Mammary epithelial cell (primary cell): ENCODE measurements at regions of chr18 and their contacts with region 1.

Region 1: DNA sequence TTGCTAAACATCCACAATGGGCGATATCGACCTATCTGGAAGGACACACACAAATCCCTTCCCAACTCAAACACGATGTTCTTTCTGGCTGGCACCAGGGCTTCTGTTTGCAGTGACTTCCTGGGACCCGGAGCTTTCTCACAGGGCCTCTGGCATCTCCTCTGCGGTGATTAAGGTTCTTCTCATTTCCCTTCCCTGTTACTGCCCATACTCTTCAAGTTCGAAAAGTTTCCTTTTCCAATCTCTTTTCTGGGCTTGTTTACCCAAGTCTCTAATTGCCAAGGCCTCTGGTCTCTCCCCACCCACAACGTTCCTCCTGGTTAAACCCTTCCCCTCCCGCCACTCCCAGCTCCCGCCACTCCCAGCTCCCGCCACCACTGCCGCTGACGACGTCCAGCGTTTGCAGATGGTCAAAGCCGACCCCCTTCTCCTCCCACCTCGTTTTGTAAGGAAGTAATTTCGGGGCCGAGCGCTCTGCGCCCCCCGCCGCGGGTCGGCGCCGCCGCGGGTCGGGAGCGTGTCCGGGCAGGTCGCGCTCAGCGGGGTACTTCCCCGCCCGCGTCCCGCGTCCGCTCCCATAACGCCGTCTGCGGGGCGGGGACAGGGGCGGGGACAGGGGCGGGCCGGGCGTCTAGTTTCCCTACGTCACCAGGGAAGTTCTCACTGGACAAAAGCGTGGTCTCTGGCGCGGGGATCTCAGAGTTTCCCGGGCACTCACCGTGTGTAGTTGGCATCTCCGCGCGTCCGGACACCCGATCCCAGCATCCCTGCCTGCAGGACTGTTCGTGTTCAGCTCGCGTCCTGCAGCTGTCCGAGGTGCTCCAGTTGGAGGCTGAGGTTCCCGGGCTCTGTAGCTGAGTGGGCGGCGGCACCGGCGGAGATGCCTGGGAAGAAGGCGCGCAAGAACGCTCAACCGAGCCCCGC is at the start of gene PMAIP1:
- DNase-seq: peak; percentile 95
- H3K4me3 ChIP-seq: peak within 1 kb of the TSS; percentile 79 to 99 (median 83)
- H3K27ac ChIP-seq: peak within 1 kb of the TSS; percentile 98
- H3K4me1 ChIP-seq: peaks cover 24% of the 10 kb centered on the region
- H3K27me3 ChIP-seq: no peaks in the 10 kb centered on the region
- CTCF ChIP-seq: no peak
- total RNA-seq, gene PMAIP1: 17.8 to 34.3 TPM

Region 2: GRCh38 chr18:59787998-59788790 is 111.4 kb before region 1 on chr18:
- CTCF ChIA-PET with region 1: no interaction called
- dilution Hi-C with region 1: no loop called
- in situ Hi-C with region 1: no loop called
- intact Hi-C with region 1: no loop called
- DNase-seq: peak; percentile 66
- H3K4me3 ChIP-seq: no peak overlapping the region
- H3K27ac ChIP-seq: no peak overlapping the region
- H3K4me1 ChIP-seq: peaks cover 14% of the 10 kb centered on the region
- H3K27me3 ChIP-seq: no peaks in the 10 kb centered on the region
- CTCF ChIP-seq: no peak

Region 3: DNA sequence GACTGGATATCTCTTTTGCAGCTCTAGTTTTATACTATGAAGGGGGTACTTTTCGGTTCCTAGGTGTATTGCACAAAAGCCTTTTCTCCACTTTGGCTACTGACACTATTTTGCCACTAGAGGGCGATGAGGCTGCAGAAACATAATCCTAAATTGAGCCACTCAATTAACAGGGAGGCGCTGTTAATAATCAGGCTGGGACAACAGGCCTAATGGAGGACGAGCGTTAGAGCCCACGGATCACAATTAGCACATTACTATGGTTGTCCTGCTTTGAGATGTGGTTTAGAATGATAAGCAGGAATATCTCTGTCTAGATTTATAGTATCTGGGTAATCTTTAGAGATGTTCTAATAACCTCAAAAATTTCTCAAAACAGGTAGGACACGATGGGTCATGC is 62.0 kb before region 1 on chr18:
- CTCF ChIA-PET with region 1: no interaction called
- dilution Hi-C with region 1: no loop called
- in situ Hi-C with region 1: loop called in 1 of 2 experiments (anchors 10 kb)
- intact Hi-C with region 1: loop called (anchors 1 kb)
- DNase-seq: peak; percentile 64
- H3K4me3 ChIP-seq: no peak overlapping the region
- H3K27ac ChIP-seq: no peak overlapping the region
- H3K4me1 ChIP-seq: no peaks in the 10 kb centered on the region
- H3K27me3 ChIP-seq: no peaks in the 10 kb centered on the region
- CTCF ChIP-seq: peak; percentile 91 to 95

Region 4: DNA sequence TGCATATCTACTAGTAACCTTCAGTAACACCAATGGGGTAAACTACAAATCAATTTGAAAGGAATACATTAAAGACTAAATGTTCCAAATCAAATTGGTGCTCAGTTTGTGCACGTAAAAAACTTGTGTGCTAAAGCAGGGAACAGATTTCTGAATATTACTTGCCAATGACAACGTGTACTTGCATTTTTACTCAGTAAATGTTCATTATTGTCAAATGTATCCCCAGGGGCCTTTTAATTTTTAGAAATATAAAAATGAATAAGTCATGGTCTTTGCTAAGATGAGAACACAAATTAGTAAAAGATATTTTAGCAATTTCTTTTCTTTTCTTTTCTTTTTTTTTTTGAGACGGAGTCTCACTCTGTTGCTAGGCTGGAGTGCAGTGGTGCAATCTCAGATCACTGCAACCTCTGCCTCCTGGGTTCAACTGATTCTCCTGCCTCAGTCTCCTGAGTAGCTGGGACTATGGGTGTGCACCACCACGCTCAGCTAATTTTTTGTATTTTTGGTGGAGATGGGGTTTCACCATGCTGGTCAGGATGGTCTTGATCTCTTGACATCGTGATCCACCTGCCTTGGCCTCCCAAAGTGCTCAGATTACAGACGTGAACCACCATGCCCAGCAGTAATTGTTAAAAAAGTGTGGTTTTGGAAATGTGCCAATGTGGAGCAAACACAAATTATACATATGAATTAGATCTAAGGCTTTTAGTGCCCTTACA is 52.9 kb after region 1 on chr18:
- CTCF ChIA-PET with region 1: no interaction called
- dilution Hi-C with region 1: no loop called
- in situ Hi-C with region 1: loop called in 1 of 2 experiments (anchors 10 kb)
- intact Hi-C with region 1: loop called (anchors 1 kb)
- DNase-seq: no peak
- H3K4me3 ChIP-seq: no peak overlapping the region
- H3K27ac ChIP-seq: peak overlapping the region; percentile 72
- H3K4me1 ChIP-seq: peaks cover 43% of the 10 kb centered on the region
- H3K27me3 ChIP-seq: no peaks in the 10 kb centered on the region
- CTCF ChIP-seq: no peak

Region 5: DNA sequence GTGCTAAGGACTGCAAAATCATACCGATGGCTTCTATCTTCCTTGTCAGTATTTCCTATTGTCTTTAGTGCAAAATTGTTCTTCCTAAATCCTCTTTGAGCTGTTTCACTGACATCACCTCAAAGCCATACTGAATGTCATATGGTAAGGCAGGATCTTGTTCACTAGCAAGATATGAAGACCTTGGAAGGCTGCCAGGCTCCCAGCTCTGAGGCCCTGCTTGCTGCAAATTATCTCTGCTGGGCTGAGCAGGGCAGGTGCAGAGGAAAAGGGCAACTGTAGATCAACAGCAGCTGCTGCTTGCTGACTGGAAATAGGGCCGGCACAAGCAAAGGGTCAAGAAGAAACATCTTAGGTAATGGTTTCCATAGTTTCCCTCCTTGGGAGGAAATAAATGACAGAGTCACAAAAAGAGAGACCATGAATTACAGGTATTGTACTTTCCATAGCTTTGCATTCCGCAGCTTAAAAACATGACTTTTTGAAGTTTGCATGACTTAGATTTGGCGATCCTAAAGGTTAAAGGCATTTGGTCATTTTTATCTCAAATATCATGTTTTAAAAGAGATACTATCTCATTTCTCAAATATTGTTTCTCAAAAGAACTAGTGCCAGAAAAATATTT is 58.5 kb after region 1 on chr18:
- CTCF ChIA-PET with region 1: no interaction called
- dilution Hi-C with region 1: no loop called
- in situ Hi-C with region 1: loop called in 1 of 2 experiments (anchors 10 kb)
- intact Hi-C with region 1: loop called (anchors 1 kb)
- DNase-seq: peak; percentile 39
- H3K4me3 ChIP-seq: no peak overlapping the region
- H3K27ac ChIP-seq: no peak overlapping the region
- H3K4me1 ChIP-seq: peaks cover 54% of the 10 kb centered on the region
- H3K27me3 ChIP-seq: no peaks in the 10 kb centered on the region
- CTCF ChIP-seq: no peak

Region 6: GRCh38 chr18:59971871-59972428 is 72.4 kb after region 1 on chr18:
- CTCF ChIA-PET with region 1: no interaction called
- dilution Hi-C with region 1: no loop called
- in situ Hi-C with region 1: no loop called
- intact Hi-C with region 1: no loop called
- DNase-seq: no peak
- H3K4me3 ChIP-seq: no peak overlapping the region
- H3K27ac ChIP-seq: no peak overlapping the region
- H3K4me1 ChIP-seq: peaks cover 8% of the 10 kb centered on the region
- H3K27me3 ChIP-seq: no peaks in the 10 kb centered on the region
- CTCF ChIP-seq: no peak

Region 7: GRCh38 chr18:60053747-60054304 is 154.3 kb after region 1 on chr18:
- CTCF ChIA-PET with region 1: no interaction called
- dilution Hi-C with region 1: loop called (anchors 25 kb)
- in situ Hi-C with region 1: no loop called
- intact Hi-C with region 1: loop called (anchors 10 kb)
- DNase-seq: peak; percentile 100
- H3K4me3 ChIP-seq: peak overlapping the region in 1 of 3 experiments; percentile 3
- H3K27ac ChIP-seq: peak overlapping the region; percentile 81
- H3K4me1 ChIP-seq: peaks cover 12% of the 10 kb centered on the region
- H3K27me3 ChIP-seq: no peaks in the 10 kb centered on the region
- CTCF ChIP-seq: no peak